ENCODE measurements at regions of chr1 and their contacts with region 1.

Region 1: GRCh38 chr1:204431310-204432165 is 19.9 kb upstream of the PPP1R15B start:
- DNase-seq: peak; percentile 82
- CTCF ChIP-seq: peak; percentile 91

Region 2: GRCh38 chr1:204266504-204267034 is 165.0 kb before region 1 on chr1:
- CTCF ChIA-PET with region 1: no interaction called
- POLR2A ChIA-PET with region 1: no interaction called
- DNase-seq: no peak
- CTCF ChIP-seq: no peak

Region 3: GRCh38 chr1:204411451-204412204 is 19.9 kb before region 1 on chr1 and contains the start of gene PPP1R15B:
- CTCF ChIA-PET with region 1: interaction called, 54 read pairs
- POLR2A ChIA-PET with region 1: no interaction called
- DNase-seq: peak; percentile 97
- CTCF ChIP-seq: no peak

Region 4: GRCh38 chr1:204417231-204417997 is 14.1 kb before region 1 on chr1:
- CTCF ChIA-PET with region 1: interaction called, 635 read pairs
- POLR2A ChIA-PET with region 1: no interaction called
- DNase-seq: no peak
- CTCF ChIP-seq: no peak

Region 5: GRCh38 chr1:204560590-204561150 is 129.1 kb after region 1 on chr1:
- CTCF ChIA-PET with region 1: no interaction called
- POLR2A ChIA-PET with region 1: no interaction called
- DNase-seq: no peak
- CTCF ChIP-seq: no peak

Region 6: DNA sequence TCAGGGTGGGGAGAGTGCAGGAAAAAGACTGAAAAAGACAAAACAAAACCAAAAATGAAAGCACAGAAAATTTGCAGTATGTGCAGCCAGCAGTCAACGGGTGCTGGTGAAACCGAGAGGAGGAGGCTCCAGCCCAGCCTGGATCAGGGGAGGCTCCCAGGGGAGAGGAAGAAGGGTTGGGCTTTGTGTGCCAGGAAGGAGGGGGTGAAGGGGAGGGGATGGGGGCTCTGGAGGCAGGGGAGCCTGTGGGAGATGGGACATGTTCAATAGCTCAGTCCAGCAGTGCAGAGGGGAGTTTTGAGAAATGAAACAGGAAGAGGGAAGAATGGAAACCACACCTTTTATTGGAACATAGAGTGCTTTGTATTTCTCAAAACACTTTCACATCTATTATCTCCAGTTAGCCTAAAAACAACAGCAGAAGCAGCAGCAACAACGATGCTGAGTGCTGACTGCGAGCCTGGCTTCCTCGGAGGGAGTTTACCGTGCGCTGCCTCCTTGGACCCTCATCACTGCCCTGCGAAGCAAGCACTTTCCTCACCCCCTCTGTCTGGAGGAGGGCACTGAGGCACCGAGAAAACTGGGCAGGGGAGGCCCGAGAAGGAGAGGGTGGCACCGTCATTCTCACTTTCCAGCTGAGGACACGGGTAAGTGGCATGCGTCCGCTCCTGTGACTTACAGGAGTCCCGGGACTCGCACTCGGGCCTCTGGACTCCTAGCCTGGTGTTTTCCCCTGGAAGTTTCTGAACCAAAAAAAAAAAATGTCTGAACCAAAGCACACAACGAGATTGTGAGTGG is 147.5 kb after region 1 on chr1:
- CTCF ChIA-PET with region 1: no interaction called
- POLR2A ChIA-PET with region 1: no interaction called
- DNase-seq: peak; percentile 74
- CTCF ChIP-seq: no peak